HepG2 (cell line): ENCODE measurements at regions of chr10 and their contacts with region 1.

Region 1: DNA sequence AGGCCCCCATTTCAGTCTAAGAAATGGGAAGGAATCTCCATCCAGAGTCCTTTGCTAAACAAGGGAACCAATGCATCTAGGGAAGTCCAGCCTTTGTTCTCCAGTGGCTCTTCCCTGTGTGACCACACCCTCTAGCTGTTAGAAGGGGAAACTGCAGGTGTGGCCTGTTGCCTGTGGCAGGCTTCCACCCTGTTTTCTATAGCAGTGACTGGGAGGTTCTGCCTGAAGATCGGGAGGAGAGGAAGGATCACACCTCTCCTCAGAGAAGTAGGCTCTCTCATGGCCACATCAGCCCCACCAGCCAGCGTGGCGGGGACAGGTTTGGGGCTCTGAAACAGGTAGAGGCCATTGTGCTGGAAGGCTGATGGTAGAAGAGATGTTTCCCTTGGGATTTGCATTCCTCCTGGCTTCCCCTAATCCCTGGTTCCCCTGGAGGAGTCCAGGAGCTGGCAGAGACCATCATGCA is 47.7 kb upstream of the TRIM8 start:
- DNase-seq: peak; percentile 70
- ATAC-seq: peak; percentile 60
- H3K4me3 ChIP-seq: peak overlapping the region in 1 of 3 experiments; percentile 47; a peak in 2 of 6 replicates
- H3K27ac ChIP-seq: peak overlapping the region; percentile 95
- H3K4me1 ChIP-seq: peaks cover 88% of the 10 kb centered on the region
- H3K27me3 ChIP-seq: no peaks in the 10 kb centered on the region
- CTCF ChIP-seq: peak; percentile 93
- EP300 ChIP-seq: no peak
- POLR2A ChIP-seq: no peak
- RAD21 ChIP-seq: peak; percentile 79

Region 2: DNA sequence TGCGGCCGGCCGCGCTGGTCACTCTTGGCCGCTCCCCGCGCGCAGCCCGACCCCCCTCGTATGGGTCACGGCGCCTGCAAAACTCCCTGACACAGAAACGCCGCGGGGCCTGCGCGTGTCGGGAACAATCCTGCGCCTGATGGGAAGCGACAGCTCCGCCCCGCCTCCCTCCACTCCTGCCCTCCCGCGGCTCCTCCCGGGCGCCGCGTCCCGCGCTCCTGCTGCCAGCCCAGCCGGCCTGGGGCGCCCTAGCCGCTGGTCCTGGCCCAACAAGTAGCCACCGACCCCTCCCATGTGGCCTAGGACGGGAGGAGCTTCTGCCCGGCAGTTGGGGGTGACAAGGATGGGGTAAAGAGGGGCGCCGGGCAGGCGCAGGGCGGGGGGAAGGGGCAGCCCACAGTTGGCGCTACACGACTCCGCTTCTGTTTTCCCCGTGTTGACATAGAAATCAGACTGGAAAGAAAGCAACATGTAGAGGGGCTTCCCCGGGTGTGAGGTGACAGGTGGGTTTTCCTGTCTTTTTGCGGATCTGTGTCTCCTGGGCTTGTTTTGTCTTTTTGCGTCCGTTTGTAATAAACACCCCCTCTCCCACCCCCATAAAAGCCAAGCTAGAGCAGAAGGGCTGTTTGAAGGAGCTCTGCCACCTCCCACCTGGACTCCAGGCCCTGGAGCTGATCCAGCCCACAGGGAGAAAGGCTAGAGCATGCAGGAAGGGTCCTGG is 1886.2 kb before region 1 on chr10:
- CTCF ChIA-PET with region 1: no interaction called
- POLR2A ChIA-PET with region 1: no interaction called
- in situ Hi-C with region 1: no loop called
- intact Hi-C with region 1: no loop called
- DNase-seq: no peak
- ATAC-seq: peak; percentile 57
- H3K4me3 ChIP-seq: no peak overlapping the region; a peak in 1 of 6 replicates
- H3K27ac ChIP-seq: no peak overlapping the region
- H3K4me1 ChIP-seq: no peaks in the 10 kb centered on the region
- H3K27me3 ChIP-seq: peaks cover 16 to 61% of the 10 kb centered on the region in 2 experiments
- CTCF ChIP-seq: no peak
- EP300 ChIP-seq: no peak
- POLR2A ChIP-seq: no peak
- RAD21 ChIP-seq: no peak

Region 3: GRCh38 chr10:102629661-102630614 is 33.4 kb after region 1 on chr10:
- CTCF ChIA-PET with region 1: no interaction called
- POLR2A ChIA-PET with region 1: interaction called, 52 read pairs
- in situ Hi-C with region 1: no loop called
- intact Hi-C with region 1: no loop called
- DNase-seq: peak; percentile 60
- ATAC-seq: peak; percentile 64
- H3K4me3 ChIP-seq: no peak overlapping the region
- H3K27ac ChIP-seq: peak overlapping the region; percentile 53
- H3K4me1 ChIP-seq: peaks cover 86% of the 10 kb centered on the region
- H3K27me3 ChIP-seq: no peaks in the 10 kb centered on the region
- CTCF ChIP-seq: no peak
- EP300 ChIP-seq: peak in 1 of 2 experiments; percentile 18; a peak in 1 of 4 replicates
- POLR2A ChIP-seq: no peak
- RAD21 ChIP-seq: no peak

Region 4: DNA sequence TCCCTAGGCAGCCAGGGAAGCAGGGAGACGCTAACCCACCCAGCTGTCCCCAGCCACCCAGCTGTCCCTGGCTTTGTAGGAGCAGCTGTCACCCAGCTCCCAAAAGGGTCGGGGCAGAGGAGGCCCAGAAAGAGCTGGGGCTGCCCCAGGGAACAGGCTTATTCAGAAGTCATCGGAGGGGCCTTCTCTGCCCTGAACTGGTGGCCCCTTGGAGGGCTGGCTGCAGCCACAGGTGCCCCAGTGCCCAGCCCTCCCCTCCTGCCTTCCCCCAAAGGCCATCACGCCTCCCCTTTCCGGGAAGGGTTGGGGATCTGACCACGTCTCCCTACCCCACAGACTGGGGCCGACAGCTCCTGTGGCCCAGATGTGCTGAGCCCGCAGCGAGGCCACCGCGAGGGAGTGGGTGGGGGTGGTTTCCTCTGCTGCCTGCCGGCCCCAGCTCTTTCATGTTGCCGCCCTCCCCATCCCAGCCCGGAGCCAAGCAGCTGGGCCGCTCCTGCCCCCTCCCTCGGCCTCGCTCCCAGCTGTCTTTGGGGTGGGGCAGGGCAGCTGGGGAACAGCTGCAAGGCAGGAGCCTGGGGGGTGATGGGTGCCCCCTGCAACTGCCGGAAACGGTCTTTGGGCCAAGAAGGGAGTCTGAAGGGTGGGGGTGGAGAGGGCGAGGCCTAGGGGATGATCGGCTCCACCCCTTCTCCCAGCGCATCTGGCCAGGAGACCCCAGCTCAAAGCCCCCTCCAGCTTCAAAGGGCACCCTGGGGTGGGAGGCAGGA is 64.5 kb after region 1 on chr10:
- CTCF ChIA-PET with region 1: no interaction called
- POLR2A ChIA-PET with region 1: interaction called, 15 read pairs
- in situ Hi-C with region 1: no loop called
- intact Hi-C with region 1: no loop called
- DNase-seq: peak; percentile 72
- ATAC-seq: peak; percentile 79
- H3K4me3 ChIP-seq: peak overlapping the region; percentile 11 to 63 (median 45); a peak in 5 of 6 replicates
- H3K27ac ChIP-seq: no peak overlapping the region
- H3K4me1 ChIP-seq: peaks cover 77% of the 10 kb centered on the region
- H3K27me3 ChIP-seq: no peaks in the 10 kb centered on the region
- CTCF ChIP-seq: peak; percentile 10; the same call in 1 of the 2 replicates
- EP300 ChIP-seq: peak; percentile 22 to 47; a peak in 2 of 4 replicates
- POLR2A ChIP-seq: 0 out of 4 replicates have a peak, but pooled peaks of 1 of the 2 experiments have one; percentile 11
- RAD21 ChIP-seq: no peak; the same call in 1 of the 2 replicates

Region 5: GRCh38 chr10:102752934-102753664 is 156.6 kb after region 1 on chr10:
- CTCF ChIA-PET with region 1: no interaction called
- POLR2A ChIA-PET with region 1: no interaction called
- in situ Hi-C with region 1: no loop called
- intact Hi-C with region 1: no loop called
- DNase-seq: peak; percentile 63
- ATAC-seq: peak; percentile 96
- H3K4me3 ChIP-seq: no peak overlapping the region
- H3K27ac ChIP-seq: no peak overlapping the region
- H3K4me1 ChIP-seq: peaks cover 31% of the 10 kb centered on the region
- H3K27me3 ChIP-seq: no peaks in the 10 kb centered on the region
- CTCF ChIP-seq: peak; percentile 75
- EP300 ChIP-seq: no peak
- POLR2A ChIP-seq: no peak
- RAD21 ChIP-seq: peak; percentile 68

Region 6: DNA sequence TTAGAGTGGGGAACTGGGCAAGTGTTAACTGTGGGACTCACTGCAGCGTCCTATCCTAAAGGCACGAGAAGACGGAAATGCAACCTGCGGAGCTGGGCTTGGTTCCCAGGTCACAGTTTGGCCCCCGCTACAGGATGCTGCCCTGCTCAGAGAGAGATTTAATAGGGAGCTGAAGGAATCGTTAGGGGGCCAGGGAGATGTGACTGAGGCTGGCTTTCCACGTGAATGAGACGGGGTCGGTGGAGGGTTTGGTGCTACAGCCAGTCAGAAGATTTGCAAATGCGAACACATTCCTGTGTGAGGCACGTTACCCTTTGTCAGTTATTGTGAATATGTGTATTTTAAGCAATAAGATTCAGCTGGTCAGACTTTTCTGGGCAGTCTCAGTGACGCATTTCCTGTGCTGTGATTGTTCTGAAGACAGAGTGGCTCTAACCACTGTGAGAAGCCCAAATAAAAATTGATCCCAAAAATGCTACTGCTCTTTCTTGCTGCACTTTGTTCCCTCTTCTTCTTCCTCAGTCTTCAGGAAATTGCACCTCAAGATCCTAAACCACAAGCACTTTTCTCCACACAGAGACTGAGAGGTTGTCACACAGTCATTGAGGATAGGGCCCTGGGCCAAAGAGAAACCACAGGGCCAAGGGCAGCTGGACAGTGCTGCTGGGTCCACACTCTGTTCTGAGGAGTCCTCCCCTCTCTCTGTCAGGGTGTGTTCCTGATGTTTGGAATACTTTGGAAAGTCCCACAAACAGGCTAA is 219.4 kb after region 1 on chr10:
- CTCF ChIA-PET with region 1: no interaction called
- POLR2A ChIA-PET with region 1: no interaction called
- in situ Hi-C with region 1: no loop called
- intact Hi-C with region 1: no loop called
- DNase-seq: no peak
- ATAC-seq: peak; percentile 8
- H3K4me3 ChIP-seq: peak overlapping the region in 1 of 3 experiments; percentile 56; a peak in 2 of 6 replicates
- H3K27ac ChIP-seq: peak overlapping the region; percentile 90
- H3K4me1 ChIP-seq: peaks cover 42% of the 10 kb centered on the region
- H3K27me3 ChIP-seq: no peaks in the 10 kb centered on the region
- CTCF ChIP-seq: no peak
- EP300 ChIP-seq: no peak
- POLR2A ChIP-seq: no peak
- RAD21 ChIP-seq: no peak

Region 7: GRCh38 chr10:102876747-102877153 is 280.2 kb after region 1 on chr10:
- CTCF ChIA-PET with region 1: no interaction called
- POLR2A ChIA-PET with region 1: no interaction called
- in situ Hi-C with region 1: no loop called
- intact Hi-C with region 1: no loop called
- DNase-seq: peak; percentile 19
- ATAC-seq: peak; percentile 83
- H3K4me3 ChIP-seq: no peak overlapping the region
- H3K27ac ChIP-seq: peak overlapping the region; percentile 39
- H3K4me1 ChIP-seq: peaks cover 12% of the 10 kb centered on the region
- H3K27me3 ChIP-seq: no peaks in the 10 kb centered on the region
- CTCF ChIP-seq: no peak
- EP300 ChIP-seq: no peak; a peak in 1 of 4 replicates
- POLR2A ChIP-seq: no peak
- RAD21 ChIP-seq: no peak